ENCODE measurements at regions of chr11 and their contacts with region 1.

Region 1: GRCh38 chr11:125625630-125626287 is 796 bp downstream of the CHEK1 start:
- DNase-seq: peak; percentile 62 to 89 (median 78)
- ATAC-seq: peak; percentile 93 to 96
- H3K4me3 Mint-ChIP-seq: peak overlapping the region; percentile 92 to 100 (median 96)
- H3K27ac Mint-ChIP-seq: peak overlapping the region; percentile 84 to 99 (median 98)
- H3K4me1 Mint-ChIP-seq: peaks cover 8 to 21% (median 18%) of the 10 kb centered on the region in 4 donors
- H3K27me3 Mint-ChIP-seq: peaks cover 0 to 4% (median 0%) of the 10 kb centered on the region in 5 donors

Region 2: GRCh38 chr11:125532668-125533067 is 93.1 kb before region 1 on chr11:
- POLR2A ChIA-PET with region 1: no interaction called
- DNase-seq: no peak
- ATAC-seq: no peak
- H3K4me3 Mint-ChIP-seq: no peak overlapping the region
- H3K27ac Mint-ChIP-seq: no peak overlapping the region
- H3K4me1 Mint-ChIP-seq: no peaks in the 10 kb centered on the region
- H3K27me3 Mint-ChIP-seq: peaks cover 3 to 16% (median 4%) of the 10 kb centered on the region in 5 donors

Region 3: DNA sequence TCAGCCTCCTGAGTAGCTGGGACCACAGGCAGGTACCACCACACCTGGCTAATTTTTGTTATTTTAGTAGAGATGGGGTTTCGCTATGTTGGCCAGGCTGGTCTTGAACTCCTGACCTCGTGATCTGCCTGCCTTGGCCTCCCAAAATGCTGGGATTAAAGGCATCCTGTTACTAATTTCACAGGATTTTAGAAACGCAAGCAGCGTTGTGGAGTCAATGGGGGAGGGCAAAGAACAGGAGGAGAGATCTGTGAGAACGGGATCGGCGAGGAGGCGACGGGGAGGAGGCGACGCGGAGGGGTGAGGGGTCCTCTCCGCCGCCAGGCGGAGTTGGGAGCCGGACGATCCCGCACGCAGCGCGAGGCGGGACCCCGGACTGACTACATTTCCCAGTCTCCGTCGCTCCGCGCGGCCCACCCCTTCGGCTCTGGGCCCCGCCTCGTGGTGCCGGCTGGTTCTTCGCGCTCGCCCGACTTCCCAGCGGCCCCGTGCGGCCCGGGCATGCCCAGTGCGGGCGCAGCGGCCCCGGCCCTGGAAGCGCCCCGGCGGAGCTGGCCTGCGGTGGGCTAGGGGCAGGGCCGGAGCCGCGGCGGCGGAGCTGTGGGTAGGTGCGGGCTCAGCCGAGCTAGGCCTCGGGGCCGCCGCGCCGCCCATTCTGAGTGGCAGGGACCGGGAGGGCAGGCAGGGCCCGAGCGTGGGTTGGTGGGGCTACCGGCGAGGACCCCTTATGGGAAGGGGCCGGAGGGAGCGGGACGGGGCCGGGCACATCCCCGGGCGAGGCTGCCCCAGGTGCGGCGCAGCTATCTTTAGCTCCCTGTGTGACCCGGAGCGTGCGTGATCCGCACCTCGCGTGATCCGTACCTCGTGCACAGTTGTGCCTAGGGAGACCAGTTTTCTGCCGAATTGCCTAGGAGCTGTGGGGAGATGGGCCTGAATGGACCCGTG is 56.5 kb before region 1 on chr11 and contains the start of gene EI24:
- POLR2A ChIA-PET with region 1: interaction called, 12 read pairs
- DNase-seq: peak; percentile 78 to 89 (median 81)
- ATAC-seq: peak; percentile 93 to 96
- H3K4me3 Mint-ChIP-seq: peak within 1 kb of the TSS; percentile 88 to 95 (median 92)
- H3K27ac Mint-ChIP-seq: peak within 1 kb of the TSS; percentile 83 to 97 (median 94)
- H3K4me1 Mint-ChIP-seq: peaks cover 12 to 46% (median 42%) of the 10 kb centered on the region in 4 donors
- H3K27me3 Mint-ChIP-seq: no peaks in the 10 kb centered on the region
- polyA plus RNA-seq, gene EI24: 56.0 to 84.4 (median 74.0) TPM